Activated CD4-positive, alpha-beta T cell treated with anti-CD3 and anti-CD28 coated beads for 36 hours (primary cell): ENCODE measurements at regions of chr12 and their contacts with region 1.

Region 1: GRCh38 chr12:113912760-113913329 is 53.3 kb downstream of the RBM19 start:
- DNase-seq: peak; percentile 72
- ATAC-seq: peak; percentile 36
- H3K4me3 Mint-ChIP-seq: no peak overlapping the region
- H3K27ac Mint-ChIP-seq: no peak overlapping the region
- H3K4me1 Mint-ChIP-seq: no peaks in the 10 kb centered on the region
- H3K27me3 Mint-ChIP-seq: no peaks in the 10 kb centered on the region

Region 2: GRCh38 chr12:113310489-113310888 is 602.4 kb before region 1 on chr12:
- CTCF ChIA-PET with region 1: no interaction called
- POLR2A ChIA-PET with region 1: no interaction called
- intact Hi-C with region 1: loop called in 1 of 2 experiments (anchors 5 kb)
- DNase-seq: peak; percentile 29
- ATAC-seq: peak; percentile 39
- H3K4me3 Mint-ChIP-seq: no peak overlapping the region
- H3K27ac Mint-ChIP-seq: no peak overlapping the region
- H3K4me1 Mint-ChIP-seq: no peaks in the 10 kb centered on the region
- H3K27me3 Mint-ChIP-seq: no peaks in the 10 kb centered on the region

Region 3: GRCh38 chr12:113439606-113440030 is 473.2 kb before region 1 on chr12:
- CTCF ChIA-PET with region 1: no interaction called
- POLR2A ChIA-PET with region 1: no interaction called
- intact Hi-C with region 1: loop called in 1 of 2 experiments (anchors 2 kb)
- DNase-seq: peak; percentile 33
- ATAC-seq: no peak
- H3K4me3 Mint-ChIP-seq: no peak overlapping the region
- H3K27ac Mint-ChIP-seq: no peak overlapping the region
- H3K4me1 Mint-ChIP-seq: no peaks in the 10 kb centered on the region
- H3K27me3 Mint-ChIP-seq: peaks cover 3% of the 10 kb centered on the region

Region 4: DNA sequence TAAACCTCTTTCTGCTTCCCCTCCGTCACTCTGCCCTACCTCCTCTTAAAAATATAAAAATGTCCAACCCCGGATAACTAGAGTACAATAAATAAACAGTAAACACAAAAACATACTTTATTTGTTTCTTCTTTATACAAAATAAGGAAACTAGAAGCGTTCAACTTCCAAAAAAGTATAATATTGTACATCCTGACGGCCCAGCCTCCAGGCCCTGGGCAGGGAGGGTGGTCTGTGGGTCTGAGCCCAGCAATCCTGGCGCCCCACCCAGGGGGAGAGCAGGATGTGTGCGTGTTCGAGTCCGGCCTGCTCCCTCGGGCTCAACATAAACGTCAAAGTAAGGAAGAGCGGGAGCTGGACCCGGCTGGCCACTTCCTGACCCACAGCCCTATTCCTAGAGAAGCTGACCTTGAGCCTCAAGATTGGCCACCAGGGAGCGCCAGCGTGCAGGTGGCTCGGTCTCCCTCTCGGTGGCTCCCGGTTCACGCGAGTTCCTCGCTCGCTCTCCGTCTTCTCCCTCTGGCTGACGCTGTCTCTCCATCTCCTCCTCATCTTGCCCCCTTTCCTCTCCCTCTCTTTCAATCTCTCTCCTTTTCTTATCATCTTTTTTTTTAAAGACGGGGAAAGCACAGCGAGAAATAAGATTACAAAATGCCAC is 450.6 kb before region 1 on chr12:
- CTCF ChIA-PET with region 1: no interaction called
- POLR2A ChIA-PET with region 1: no interaction called
- intact Hi-C with region 1: loop called (anchors 1 to 2 kb)
- DNase-seq: peak; percentile 89
- ATAC-seq: peak; percentile 71
- H3K4me3 Mint-ChIP-seq: peak overlapping the region; percentile 64
- H3K27ac Mint-ChIP-seq: no peak overlapping the region
- H3K4me1 Mint-ChIP-seq: peaks cover 19% of the 10 kb centered on the region
- H3K27me3 Mint-ChIP-seq: peaks cover 59% of the 10 kb centered on the region

Region 5: GRCh38 chr12:113647048-113647447 is 265.8 kb before region 1 on chr12:
- CTCF ChIA-PET with region 1: no interaction called
- POLR2A ChIA-PET with region 1: no interaction called
- intact Hi-C with region 1: loop called in 1 of 2 experiments (anchors 5 kb)
- DNase-seq: peak; percentile 36
- ATAC-seq: no peak
- H3K4me3 Mint-ChIP-seq: no peak overlapping the region
- H3K27ac Mint-ChIP-seq: no peak overlapping the region
- H3K4me1 Mint-ChIP-seq: no peaks in the 10 kb centered on the region
- H3K27me3 Mint-ChIP-seq: peaks cover 41% of the 10 kb centered on the region